Dendritic cell treated with granulocyte-macrophage colony-stimulating factor and Interleukin-4, amounts not matched to agents 40 ng/mL and 50 ng/mL, for 4 days (primary cell): ENCODE measurements at regions of chr12 and their contacts with region 1.

Region 1: DNA sequence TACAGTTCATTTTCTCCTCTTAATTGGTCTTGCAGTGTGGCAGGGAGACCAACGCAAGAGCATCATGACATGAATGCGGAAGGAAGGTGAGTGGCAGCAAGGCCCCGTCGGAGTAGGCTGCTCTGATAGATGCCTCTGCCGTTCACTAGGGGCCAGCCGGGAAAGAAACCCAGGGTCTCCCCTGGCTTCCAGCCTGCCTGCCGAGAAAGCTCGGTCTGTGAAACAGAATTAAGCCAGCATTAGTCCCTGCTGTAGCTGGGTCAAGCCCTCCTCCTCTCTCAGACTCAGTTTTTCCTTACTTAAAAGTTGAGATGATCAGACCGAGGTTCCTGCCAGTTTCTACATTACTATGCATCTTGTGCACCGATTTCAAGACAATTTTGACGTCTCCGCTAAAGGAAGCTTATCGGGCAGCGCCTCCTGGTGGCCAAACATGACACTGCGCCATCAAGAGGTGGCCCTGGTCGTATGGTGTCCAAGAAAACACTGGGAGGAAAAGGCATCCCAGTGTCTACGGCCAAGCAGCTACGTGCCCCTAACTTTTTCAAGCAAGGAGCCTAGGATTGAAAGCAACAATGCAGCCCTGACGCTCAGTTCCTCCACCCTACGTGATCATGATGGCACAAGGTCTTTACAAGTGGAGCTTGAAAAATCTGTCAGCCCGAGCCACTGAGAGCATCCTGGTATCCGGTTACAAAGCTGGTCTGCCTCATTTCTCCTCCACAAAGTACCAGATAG is 131.6 kb downstream of the KSR2 start:
- H3K4me3 Mint-ChIP-seq: no peak overlapping the region
- H3K27ac Mint-ChIP-seq: no peak overlapping the region
- H3K4me1 Mint-ChIP-seq: no peaks in the 10 kb centered on the region
- H3K27me3 Mint-ChIP-seq: peaks cover 7% of the 10 kb centered on the region

Region 2: GRCh38 chr12:117158911-117159310 is 678.3 kb before region 1 on chr12:
- intact Hi-C with region 1: no loop called
- H3K4me3 Mint-ChIP-seq: no peak overlapping the region
- H3K27ac Mint-ChIP-seq: no peak overlapping the region
- H3K4me1 Mint-ChIP-seq: no peaks in the 10 kb centered on the region
- H3K27me3 Mint-ChIP-seq: no peaks in the 10 kb centered on the region

Region 3: GRCh38 chr12:117212563-117213190 is 624.5 kb before region 1 on chr12:
- intact Hi-C with region 1: loop called (anchors 1 kb)
- H3K4me3 Mint-ChIP-seq: no peak overlapping the region
- H3K27ac Mint-ChIP-seq: no peak overlapping the region
- H3K4me1 Mint-ChIP-seq: no peaks in the 10 kb centered on the region
- H3K27me3 Mint-ChIP-seq: peaks cover 24% of the 10 kb centered on the region

Region 4: DNA sequence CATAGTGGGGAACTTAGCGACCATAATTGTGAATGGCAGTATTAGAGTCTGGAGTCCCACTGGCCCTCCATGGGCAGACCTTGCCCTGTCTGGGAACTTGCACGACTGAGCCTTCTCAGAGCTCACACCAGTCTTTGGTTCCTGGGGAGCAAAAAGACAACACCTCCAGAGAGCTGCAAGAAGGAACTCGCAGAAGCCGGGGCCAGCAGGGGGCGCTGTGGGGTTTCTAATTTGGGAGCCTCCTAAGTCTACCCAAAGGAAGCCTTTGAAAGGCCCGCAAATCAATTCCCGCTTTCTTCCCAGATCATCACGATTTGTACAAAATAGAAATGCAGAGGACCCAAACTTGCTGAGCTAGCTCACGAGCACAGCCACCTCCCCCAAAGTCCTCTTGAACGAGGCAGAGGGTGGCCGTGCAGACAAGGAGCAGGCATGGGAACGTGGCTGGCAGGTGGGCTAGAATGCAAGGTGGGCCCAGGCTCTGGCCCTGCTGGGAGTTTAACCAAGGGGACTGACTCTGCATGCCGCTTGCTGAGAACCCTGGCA is 600.6 kb before region 1 on chr12:
- intact Hi-C with region 1: loop called (anchors 2 kb)
- H3K4me3 Mint-ChIP-seq: no peak overlapping the region
- H3K27ac Mint-ChIP-seq: no peak overlapping the region
- H3K4me1 Mint-ChIP-seq: no peaks in the 10 kb centered on the region
- H3K27me3 Mint-ChIP-seq: peaks cover 3% of the 10 kb centered on the region

Region 5: DNA sequence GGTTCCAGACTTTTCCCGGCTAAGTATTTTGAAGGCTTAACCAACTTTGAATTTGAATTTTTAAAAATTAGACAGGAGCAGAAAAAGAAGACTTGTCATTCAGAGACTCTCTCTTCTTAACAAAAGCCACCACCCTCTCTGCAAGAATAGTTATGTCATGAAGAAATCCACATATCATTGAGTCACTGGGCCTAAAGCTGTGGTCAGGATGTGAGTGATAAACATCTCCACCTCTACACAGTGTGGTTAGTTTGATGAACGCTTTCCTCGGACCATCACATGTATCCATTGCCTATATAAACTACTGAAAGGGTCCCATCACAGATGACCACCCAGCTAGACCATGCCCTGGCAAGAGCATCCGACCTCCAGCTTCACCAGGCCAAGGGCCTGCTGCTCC is 94.4 kb before region 1 on chr12:
- intact Hi-C with region 1: no loop called
- H3K4me3 Mint-ChIP-seq: no peak overlapping the region
- H3K27ac Mint-ChIP-seq: no peak overlapping the region
- H3K4me1 Mint-ChIP-seq: no peaks in the 10 kb centered on the region
- H3K27me3 Mint-ChIP-seq: no peaks in the 10 kb centered on the region

Region 6: DNA sequence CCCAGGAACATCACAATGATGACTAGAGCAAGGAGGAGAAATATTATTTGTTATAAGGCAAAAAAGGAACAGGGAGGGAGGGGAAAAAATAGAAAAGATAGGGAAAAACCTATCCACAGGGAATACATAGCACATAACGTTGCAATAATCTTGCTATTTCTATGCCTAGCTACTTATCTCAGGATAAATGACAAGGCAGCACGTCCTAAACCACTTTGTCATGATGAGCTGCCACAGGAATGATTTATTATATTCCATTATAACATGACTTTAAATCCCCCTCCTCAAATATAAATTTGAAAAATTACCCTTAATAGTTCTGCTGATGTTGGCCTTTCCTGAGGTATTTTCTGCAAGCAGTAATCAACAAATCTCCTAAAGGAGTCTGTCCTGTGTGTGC is 375.4 kb after region 1 on chr12:
- intact Hi-C with region 1: no loop called
- H3K4me3 Mint-ChIP-seq: no peak overlapping the region
- H3K27ac Mint-ChIP-seq: no peak overlapping the region
- H3K4me1 Mint-ChIP-seq: no peaks in the 10 kb centered on the region
- H3K27me3 Mint-ChIP-seq: no peaks in the 10 kb centered on the region